ENCODE measurements at regions of chr6 and their contacts with region 1.

Region 1: DNA sequence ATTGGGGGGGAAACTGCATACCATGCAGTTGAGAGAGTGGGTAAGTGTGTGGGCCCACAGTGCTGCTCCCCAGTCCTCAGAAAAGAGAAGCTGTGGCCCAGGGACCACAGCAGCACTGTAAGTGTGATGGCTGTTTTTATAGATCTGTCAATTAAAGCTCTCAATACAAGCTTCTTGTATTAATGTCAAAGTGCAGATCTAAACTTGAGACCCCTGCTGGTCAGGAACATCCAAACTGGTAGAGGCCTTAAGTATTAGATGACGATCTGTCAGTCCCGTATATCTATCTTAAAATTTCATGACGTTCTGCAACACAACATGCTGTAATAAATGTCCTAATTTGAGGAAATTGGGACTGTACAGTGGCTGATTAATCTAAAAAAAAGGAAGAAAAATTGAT is 74.8 kb downstream of the TULP4 start:
- DNase-seq: peak in 7 of 35 experiments; percentile 2 to 46 (median 9)
- ATAC-seq: no peak
- H3K4me3 ChIP-seq: no peak overlapping the region
- H3K4me3 Mint-ChIP-seq: no peak overlapping the region
- H3K27ac ChIP-seq: no peak overlapping the region
- H3K27ac Mint-ChIP-seq: no peak overlapping the region
- H3K4me1 ChIP-seq: no peaks in the 10 kb centered on the region
- H3K4me1 Mint-ChIP-seq: peaks cover 13 to 21% (median 15%) of the 10 kb centered on the region in 3 donors
- H3K27me3 ChIP-seq: no peaks in the 10 kb centered on the region
- H3K27me3 Mint-ChIP-seq: no peaks in the 10 kb centered on the region

Region 2: GRCh38 chr6:157954150-157955117 is 432.6 kb before region 1 on chr6:
- CTCF ChIA-PET with region 1: no interaction called
- POLR2A ChIA-PET with region 1: no interaction called
- DNase-seq: no peak
- ATAC-seq: no peak
- H3K4me3 ChIP-seq: peak overlapping the region in 1 of 2 donors; percentile 15
- H3K4me3 Mint-ChIP-seq: no peak overlapping the region
- H3K27ac ChIP-seq: no peak overlapping the region
- H3K27ac Mint-ChIP-seq: no peak overlapping the region
- H3K4me1 ChIP-seq: no peaks in the 10 kb centered on the region
- H3K4me1 Mint-ChIP-seq: peaks cover 0 to 3% (median 0%) of the 10 kb centered on the region in 3 donors
- H3K27me3 ChIP-seq: peaks cover 0 to 17% of the 10 kb centered on the region in 2 experiments
- H3K27me3 Mint-ChIP-seq: no peaks in the 10 kb centered on the region

Region 3: GRCh38 chr6:158220786-158221442 is 166.1 kb before region 1 on chr6:
- CTCF ChIA-PET with region 1: interaction called, 4 to 24 read pairs
- POLR2A ChIA-PET with region 1: interaction called in 1 of 2 experiments, 4 read pairs
- DNase-seq: peak; percentile 34 to 86 (median 61)
- ATAC-seq: peak; percentile 83 to 91 (median 88)
- H3K4me3 ChIP-seq: no peak overlapping the region
- H3K4me3 Mint-ChIP-seq: no peak overlapping the region
- H3K27ac ChIP-seq: no peak overlapping the region
- H3K27ac Mint-ChIP-seq: no peak overlapping the region
- H3K4me1 ChIP-seq: peaks cover 0 to 2% of the 10 kb centered on the region in 2 experiments
- H3K4me1 Mint-ChIP-seq: peaks cover 0 to 4% (median 2%) of the 10 kb centered on the region in 3 donors
- H3K27me3 ChIP-seq: no peaks in the 10 kb centered on the region
- H3K27me3 Mint-ChIP-seq: no peaks in the 10 kb centered on the region

Region 4: GRCh38 chr6:158566207-158566818 is 179.3 kb after region 1 on chr6:
- CTCF ChIA-PET with region 1: no interaction called
- POLR2A ChIA-PET with region 1: interaction called in 1 of 2 experiments, 10 read pairs
- DNase-seq: no peak
- ATAC-seq: no peak
- H3K4me3 ChIP-seq: no peak overlapping the region
- H3K4me3 Mint-ChIP-seq: peak overlapping the region in 2 of 3 donors; percentile 25 to 78
- H3K27ac ChIP-seq: peak overlapping the region; percentile 69
- H3K27ac Mint-ChIP-seq: peak overlapping the region; percentile 97 to 98
- H3K4me1 ChIP-seq: peaks cover 16 to 93% of the 10 kb centered on the region in 2 experiments
- H3K4me1 Mint-ChIP-seq: peaks cover 77 to 88% (median 77%) of the 10 kb centered on the region in 3 donors
- H3K27me3 ChIP-seq: no peaks in the 10 kb centered on the region
- H3K27me3 Mint-ChIP-seq: no peaks in the 10 kb centered on the region

Measured in T-cell (primary cell).